ENCODE measurements at regions of chr18 and their contacts with region 1.

Region 1: DNA sequence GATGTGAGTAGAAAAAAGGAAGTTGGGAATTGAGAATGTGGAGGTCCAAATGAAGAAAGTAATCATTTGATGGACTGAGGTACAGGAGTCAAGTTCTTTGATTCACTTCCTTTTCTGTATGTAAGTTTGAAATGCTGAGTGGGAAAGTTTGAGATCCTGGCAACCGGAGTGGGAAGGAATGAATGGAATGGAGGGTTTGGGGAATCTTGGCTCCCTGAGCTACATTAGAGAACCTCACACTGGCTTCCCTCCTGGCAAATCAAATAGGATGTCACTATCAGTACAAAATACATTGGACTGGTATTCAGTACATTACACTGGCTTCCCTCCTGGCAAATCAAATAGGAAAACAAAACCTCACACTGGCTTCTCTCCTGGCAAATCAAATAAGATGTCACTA is 9.8 kb upstream of the RNF138 start:
- DNase-seq: no peak

Region 2: GRCh38 chr18:32048507-32049091 is 33.3 kb before region 1 on chr18:
- CTCF ChIA-PET with region 1: no interaction called
- POLR2A ChIA-PET with region 1: no interaction called
- DNase-seq: no peak

Region 3: GRCh38 chr18:32067375-32068167 is 14.3 kb before region 1 on chr18:
- CTCF ChIA-PET with region 1: interaction called, 14 read pairs
- POLR2A ChIA-PET with region 1: no interaction called
- DNase-seq: no peak

Region 4: DNA sequence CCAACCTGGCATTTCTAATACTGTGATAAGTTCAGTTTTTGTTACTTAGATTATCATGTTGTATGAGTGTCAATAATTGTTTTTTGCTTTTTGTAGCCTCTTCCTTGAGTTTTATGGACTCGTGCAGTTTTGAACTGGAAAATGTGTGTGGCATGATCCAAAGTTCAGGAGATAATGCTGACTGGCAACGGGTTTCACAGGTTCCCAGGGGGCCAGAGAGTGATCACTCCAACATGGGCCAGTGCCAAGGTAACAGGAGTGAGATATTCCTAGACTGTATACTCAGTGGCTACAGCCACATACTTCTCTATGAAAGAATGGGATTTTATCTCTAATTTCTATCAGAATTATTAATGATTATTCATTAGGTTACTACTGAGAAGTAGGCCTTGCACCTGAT is 126.1 kb after region 1 on chr18:
- CTCF ChIA-PET with region 1: no interaction called
- POLR2A ChIA-PET with region 1: no interaction called
- DNase-seq: no peak